OCI-LY7 (cell line): ENCODE measurements at regions of chr6 and their contacts with region 1.

Region 1: DNA sequence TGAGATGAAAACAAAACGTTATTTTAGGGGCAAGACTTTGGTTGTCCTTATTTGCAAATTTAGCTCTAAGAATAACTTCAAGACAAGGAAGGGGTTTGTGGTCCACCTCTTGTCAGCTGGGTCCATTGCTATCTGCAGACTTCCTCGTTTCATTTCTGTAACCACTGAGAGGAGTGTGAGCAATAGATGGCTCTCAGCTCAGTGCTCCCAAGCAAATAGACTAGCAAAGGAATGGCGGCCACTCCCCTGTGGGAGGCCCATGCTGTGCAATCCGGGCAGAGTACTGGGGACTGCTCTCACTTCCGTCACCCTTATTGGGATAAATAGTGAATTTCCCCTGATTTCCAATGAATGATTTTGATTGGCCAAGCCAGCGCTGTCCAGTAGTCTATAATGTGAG is 176.6 kb downstream of the ZDHHC14 start:
- DNase-seq: peak; percentile 77
- H3K4me3 ChIP-seq: peak overlapping the region; percentile 50
- H3K27ac ChIP-seq: peak overlapping the region; percentile 79
- H3K4me1 ChIP-seq: peaks cover 66% of the 10 kb centered on the region
- CTCF ChIP-seq: no peak

Region 2: DNA sequence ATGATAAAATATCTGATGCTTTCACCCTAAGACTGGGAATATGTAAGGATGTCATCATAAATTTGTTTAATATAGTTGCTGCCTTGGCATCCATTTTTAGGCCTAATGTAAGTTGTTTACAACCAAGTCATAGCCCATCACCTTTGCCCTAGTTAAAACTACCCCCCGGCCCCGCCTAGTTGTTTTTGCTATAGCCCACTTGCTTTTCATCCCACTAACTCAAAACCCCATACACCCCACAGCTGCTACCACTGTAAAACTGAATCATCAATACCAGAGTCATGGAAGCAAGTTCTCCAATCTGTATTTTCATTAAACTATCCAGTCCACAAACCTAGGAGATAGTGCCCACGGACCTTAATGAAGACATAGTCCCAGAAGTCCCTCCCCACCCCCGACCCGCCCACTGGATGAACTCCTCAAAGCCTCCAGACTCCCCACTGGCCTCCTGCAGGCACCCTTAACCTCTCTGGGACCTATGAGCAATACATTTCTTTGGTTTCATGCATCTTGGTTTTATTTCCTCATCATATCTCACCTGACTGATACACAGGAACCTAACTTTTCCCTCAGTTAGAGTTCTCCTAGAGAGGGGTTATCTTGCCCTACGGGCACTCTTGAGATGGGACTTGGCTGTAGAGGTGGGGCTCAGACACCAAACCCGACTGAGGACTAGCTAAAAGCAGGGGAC is 189.1 kb before region 1 on chr6:
- CTCF ChIA-PET with region 1: no interaction called
- POLR2A ChIA-PET with region 1: no interaction called
- intact Hi-C with region 1: loop called (anchors 10 kb)
- DNase-seq: no peak
- H3K4me3 ChIP-seq: no peak overlapping the region
- H3K27ac ChIP-seq: no peak overlapping the region
- H3K4me1 ChIP-seq: peaks cover 21% of the 10 kb centered on the region
- CTCF ChIP-seq: no peak

Region 3: GRCh38 chr6:157571269-157571668 is 13.7 kb after region 1 on chr6:
- CTCF ChIA-PET with region 1: interaction called, 3 read pairs
- POLR2A ChIA-PET with region 1: interaction called, 29 read pairs
- intact Hi-C with region 1: loop called (anchors 1 kb)
- DNase-seq: peak; percentile 91
- H3K4me3 ChIP-seq: peak overlapping the region; percentile 65
- H3K27ac ChIP-seq: peak overlapping the region; percentile 97
- H3K4me1 ChIP-seq: peaks cover 69% of the 10 kb centered on the region
- CTCF ChIP-seq: peak; percentile 42; the same call in 1 of the 2 replicates

Region 4: DNA sequence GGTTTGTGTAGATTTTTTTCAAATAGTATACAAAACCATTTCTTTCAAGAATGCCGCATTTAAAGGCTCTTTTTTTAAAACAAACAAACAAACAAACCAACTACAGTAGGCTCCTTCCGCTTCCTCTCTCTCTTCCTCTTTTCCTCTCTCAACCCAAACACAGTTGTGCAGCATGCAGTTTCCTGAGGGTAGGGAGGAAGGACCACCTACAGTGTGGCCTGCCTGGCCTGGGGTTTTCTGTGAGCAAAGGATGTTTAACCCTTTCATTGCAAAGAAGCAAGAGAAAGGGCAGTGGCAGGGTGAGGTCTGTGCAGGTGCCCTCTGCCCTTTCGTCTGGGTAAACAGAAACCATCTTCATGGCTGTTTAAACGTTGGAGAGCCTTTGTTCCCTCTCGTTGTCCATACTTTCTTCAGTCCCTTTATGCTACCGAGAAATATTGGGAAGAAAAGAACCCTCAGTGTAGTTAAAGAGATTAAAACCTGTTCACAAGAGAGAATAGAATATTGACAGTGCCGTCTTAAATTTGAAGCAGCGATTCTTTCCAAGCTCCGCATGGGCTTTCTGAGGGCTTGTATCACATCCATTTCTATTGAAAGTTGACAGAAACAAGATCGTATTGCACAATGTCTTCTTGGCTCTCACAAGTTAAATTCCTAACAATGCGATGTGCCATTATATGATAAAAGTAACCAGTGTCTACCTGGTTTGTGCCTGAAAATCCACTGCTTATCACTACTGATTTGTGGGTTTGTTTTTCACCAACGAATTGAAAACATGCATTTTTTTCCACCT is 50.0 kb after region 1 on chr6:
- CTCF ChIA-PET with region 1: no interaction called
- POLR2A ChIA-PET with region 1: no interaction called
- intact Hi-C with region 1: no loop called
- DNase-seq: peak; percentile 79
- H3K4me3 ChIP-seq: peak overlapping the region; percentile 10
- H3K27ac ChIP-seq: peak overlapping the region; percentile 36
- H3K4me1 ChIP-seq: peaks cover 41% of the 10 kb centered on the region
- CTCF ChIP-seq: no peak